Activated T-helper 1 cell treated with anti-CD3 and anti-CD28 coated beads, Interleukin-12 subunit alpha, Interleukin-12 subunit beta, Interleukin-2, Interleukin-4 antibody, amounts not matched to agents 30 ng/mL and 10 ng/mL and 1 ng/mL, durations not matched to agents 14 hours and 24 hours and 36 hours (primary cell): ENCODE measurements at regions of chr1 and their contacts with region 1.

Region 1: DNA sequence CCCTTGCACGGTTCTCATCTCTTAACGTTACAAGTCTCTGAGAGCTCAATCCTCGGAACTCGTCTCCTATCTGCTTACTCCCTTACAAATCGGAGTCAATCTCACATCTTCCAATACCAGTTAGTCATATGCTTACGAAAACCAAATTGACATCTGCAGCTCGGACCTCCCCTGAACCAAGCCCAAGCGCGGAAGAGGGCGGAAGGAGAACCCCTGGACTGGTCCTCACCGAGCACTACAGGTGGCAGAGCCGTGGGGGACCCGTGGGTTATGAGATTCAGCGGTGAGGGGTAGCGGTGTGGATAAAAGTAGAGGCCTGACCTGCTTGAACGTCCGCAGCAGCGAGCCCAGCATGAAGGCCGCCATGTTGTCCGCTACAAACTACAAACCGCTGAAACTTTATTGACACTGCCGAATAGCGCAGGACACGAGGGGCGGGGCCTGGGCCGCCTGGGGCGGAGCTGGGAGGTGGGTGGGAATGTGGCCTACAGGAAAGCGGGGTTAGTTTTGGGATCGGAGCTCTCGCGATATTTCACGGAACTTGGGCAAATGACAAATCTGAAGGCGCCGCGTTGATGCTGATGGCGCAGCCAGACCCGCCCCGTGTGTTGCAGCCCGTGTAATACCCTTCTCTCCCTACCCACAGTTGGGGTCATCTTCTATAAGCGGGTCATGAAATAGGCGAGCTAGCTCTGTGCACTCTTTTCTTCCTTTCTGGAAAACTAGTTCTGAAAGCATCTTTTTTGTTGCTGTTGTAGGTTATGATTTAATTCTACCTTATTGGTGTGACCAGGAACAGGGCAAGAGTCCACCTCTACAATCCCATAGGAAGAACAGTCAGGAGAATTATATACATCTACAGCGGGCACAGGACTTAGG is at the start of gene MRPS14:
- DNase-seq: peak; percentile 95
- H3K4me3 Mint-ChIP-seq: peak within 1 kb of the TSS; percentile 95
- H3K27ac Mint-ChIP-seq: peak within 1 kb of the TSS; percentile 93
- H3K4me1 Mint-ChIP-seq: peaks cover 19% of the 10 kb centered on the region
- H3K27me3 Mint-ChIP-seq: no peaks in the 10 kb centered on the region
- total RNA-seq, gene MRPS14: 29.2 and 29.9 TPM in 2 replicates

Region 2: GRCh38 chr1:173867753-173868265 is 1155.5 kb before region 1 on chr1 and contains the start of gene GAS5:
- intact Hi-C with region 1: loop called (anchors 1 kb)
- DNase-seq: peak; percentile 99
- H3K4me3 Mint-ChIP-seq: peak within 1 kb of the TSS; percentile 98
- H3K27ac Mint-ChIP-seq: peak within 1 kb of the TSS; percentile 98
- H3K4me1 Mint-ChIP-seq: peaks cover 66% of the 10 kb centered on the region
- H3K27me3 Mint-ChIP-seq: no peaks in the 10 kb centered on the region
- total RNA-seq, gene GAS5: 653 and 688 TPM in 2 replicates

Region 3: GRCh38 chr1:174958396-174958795 is 64.9 kb before region 1 on chr1:
- intact Hi-C with region 1: no loop called
- DNase-seq: no peak
- H3K4me3 Mint-ChIP-seq: peak overlapping the region; percentile 45
- H3K27ac Mint-ChIP-seq: peak overlapping the region; percentile 59
- H3K4me1 Mint-ChIP-seq: peaks cover 43% of the 10 kb centered on the region
- H3K27me3 Mint-ChIP-seq: no peaks in the 10 kb centered on the region

Region 4: DNA sequence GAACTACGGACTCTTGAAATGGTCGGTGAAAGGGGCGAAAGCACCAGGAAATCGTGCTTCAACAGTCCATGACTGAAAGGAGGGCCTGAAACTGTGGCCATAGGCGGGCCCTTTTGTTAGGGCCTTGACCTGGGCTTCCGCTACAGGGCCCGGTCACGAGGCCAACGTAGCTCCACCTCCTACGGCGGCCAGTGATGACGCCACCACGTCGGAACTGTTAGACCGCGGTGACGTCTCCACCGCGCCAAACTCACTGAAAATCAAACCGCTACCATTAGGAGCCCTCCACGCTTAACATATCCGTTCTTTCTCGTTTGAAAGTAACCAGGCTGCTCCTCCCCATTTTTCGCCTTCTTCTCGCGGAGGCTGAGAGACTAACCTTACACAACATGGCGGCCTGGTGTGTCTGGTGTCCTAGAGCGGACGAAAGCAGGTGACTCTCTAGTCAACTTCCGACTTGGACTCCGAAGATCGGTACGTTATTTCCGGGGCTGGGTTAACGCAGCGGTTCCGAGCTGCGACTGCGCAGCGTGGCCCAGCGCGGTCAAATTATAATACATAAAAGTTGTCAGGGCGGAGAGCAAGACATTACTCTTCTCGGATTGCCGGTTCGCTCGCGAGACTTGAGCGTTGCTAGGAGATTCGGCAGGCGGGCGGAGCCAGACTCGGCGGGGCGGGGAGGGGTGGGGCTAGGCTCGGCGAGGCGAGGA is 23.9 kb before region 1 on chr1:
- intact Hi-C with region 1: loop called (anchors 1 kb)
- DNase-seq: peak; percentile 96
- H3K4me3 Mint-ChIP-seq: no peak overlapping the region
- H3K27ac Mint-ChIP-seq: no peak overlapping the region
- H3K4me1 Mint-ChIP-seq: peaks cover 29% of the 10 kb centered on the region
- H3K27me3 Mint-ChIP-seq: no peaks in the 10 kb centered on the region

Region 5: GRCh38 chr1:175154629-175155472 is 131.6 kb after region 1 on chr1:
- intact Hi-C with region 1: loop called (anchors 2 kb)
- DNase-seq: peak; percentile 57
- H3K4me3 Mint-ChIP-seq: no peak overlapping the region
- H3K27ac Mint-ChIP-seq: no peak overlapping the region
- H3K4me1 Mint-ChIP-seq: peaks cover 33% of the 10 kb centered on the region
- H3K27me3 Mint-ChIP-seq: peaks cover 29% of the 10 kb centered on the region

Region 6: GRCh38 chr1:175208773-175209492 is 185.7 kb after region 1 on chr1:
- intact Hi-C with region 1: loop called (anchors 5 kb)
- DNase-seq: peak; percentile 60
- H3K4me3 Mint-ChIP-seq: peak overlapping the region; percentile 81
- H3K27ac Mint-ChIP-seq: peak overlapping the region; percentile 98
- H3K4me1 Mint-ChIP-seq: peaks cover 67% of the 10 kb centered on the region
- H3K27me3 Mint-ChIP-seq: peaks cover 2% of the 10 kb centered on the region